Activated T-helper 2 cell treated with anti-CD3 and anti-CD28 coated beads, Interferon-gamma antibody, Interleukin-2, Interleukin-4, amounts not matched to agents 10 μg/mL and 5 μg/mL and 100 μg/mL, durations not matched to agents 14 hours and 24 hours and 36 hours (primary cell): ENCODE measurements at regions of chr14 and their contacts with region 1.

Region 1: DNA sequence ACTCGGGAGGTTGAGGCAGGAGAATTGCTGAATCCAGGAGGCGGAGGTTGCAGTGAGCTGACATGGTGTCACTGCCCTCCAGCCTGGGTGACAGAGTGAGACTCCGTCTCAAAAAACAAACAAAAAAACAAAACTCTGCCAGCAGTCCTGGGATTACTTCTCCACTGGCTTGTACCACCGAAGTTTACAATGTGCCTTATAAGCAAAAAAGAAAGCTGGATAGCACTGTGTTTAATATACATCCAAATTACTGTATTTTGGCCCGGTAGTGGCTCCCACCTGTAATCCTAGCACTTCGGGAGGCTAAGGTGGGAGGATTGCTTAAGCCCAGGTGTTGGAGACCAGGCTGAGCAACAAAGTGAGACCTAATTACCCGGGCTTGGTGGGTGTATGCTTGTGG is 16.7 kb downstream of the HOMEZ start:
- DNase-seq: no peak
- H3K4me3 Mint-ChIP-seq: no peak overlapping the region
- H3K27ac Mint-ChIP-seq: no peak overlapping the region
- H3K4me1 Mint-ChIP-seq: no peaks in the 10 kb centered on the region
- H3K27me3 Mint-ChIP-seq: peaks cover 7% of the 10 kb centered on the region

Region 2: GRCh38 chr14:22131749-22132476 is 1137.3 kb before region 1 on chr14:
- intact Hi-C with region 1: no loop called
- DNase-seq: no peak
- H3K4me3 Mint-ChIP-seq: no peak overlapping the region
- H3K27ac Mint-ChIP-seq: no peak overlapping the region
- H3K4me1 Mint-ChIP-seq: peaks cover 10% of the 10 kb centered on the region
- H3K27me3 Mint-ChIP-seq: peaks cover 2% of the 10 kb centered on the region

Region 3: GRCh38 chr14:23209651-23210423 is 59.4 kb before region 1 on chr14:
- intact Hi-C with region 1: no loop called
- DNase-seq: no peak
- H3K4me3 Mint-ChIP-seq: no peak overlapping the region
- H3K27ac Mint-ChIP-seq: no peak overlapping the region
- H3K4me1 Mint-ChIP-seq: no peaks in the 10 kb centered on the region
- H3K27me3 Mint-ChIP-seq: peaks cover 19% of the 10 kb centered on the region

Region 4: GRCh38 chr14:23294734-23295561 is 25.8 kb after region 1 on chr14:
- intact Hi-C with region 1: loop called (anchors 1 kb)
- DNase-seq: peak; percentile 59
- H3K4me3 Mint-ChIP-seq: no peak overlapping the region
- H3K27ac Mint-ChIP-seq: peak overlapping the region; percentile 40
- H3K4me1 Mint-ChIP-seq: peaks cover 11% of the 10 kb centered on the region
- H3K27me3 Mint-ChIP-seq: no peaks in the 10 kb centered on the region

Region 5: GRCh38 chr14:23306410-23307145 is 37.4 kb after region 1 on chr14 and contains the start of gene BCL2L2:
- intact Hi-C with region 1: no loop called
- DNase-seq: no peak
- H3K4me3 Mint-ChIP-seq: peak within 1 kb of the TSS; percentile 80
- H3K27ac Mint-ChIP-seq: peak within 1 kb of the TSS; percentile 78
- H3K4me1 Mint-ChIP-seq: peaks cover 25% of the 10 kb centered on the region
- H3K27me3 Mint-ChIP-seq: peaks cover 4% of the 10 kb centered on the region
- total RNA-seq, gene BCL2L2: 9.3 and 10.1 TPM in 2 replicates

Region 6: GRCh38 chr14:23719225-23719946 is 450.2 kb after region 1 on chr14:
- intact Hi-C with region 1: no loop called
- DNase-seq: no peak
- H3K4me3 Mint-ChIP-seq: no peak overlapping the region
- H3K27ac Mint-ChIP-seq: no peak overlapping the region
- H3K4me1 Mint-ChIP-seq: no peaks in the 10 kb centered on the region
- H3K27me3 Mint-ChIP-seq: no peaks in the 10 kb centered on the region